Heart left ventricle (tissue), 16 donors: ENCODE measurements at regions of chr3 and their contacts with region 1.

Region 1: DNA sequence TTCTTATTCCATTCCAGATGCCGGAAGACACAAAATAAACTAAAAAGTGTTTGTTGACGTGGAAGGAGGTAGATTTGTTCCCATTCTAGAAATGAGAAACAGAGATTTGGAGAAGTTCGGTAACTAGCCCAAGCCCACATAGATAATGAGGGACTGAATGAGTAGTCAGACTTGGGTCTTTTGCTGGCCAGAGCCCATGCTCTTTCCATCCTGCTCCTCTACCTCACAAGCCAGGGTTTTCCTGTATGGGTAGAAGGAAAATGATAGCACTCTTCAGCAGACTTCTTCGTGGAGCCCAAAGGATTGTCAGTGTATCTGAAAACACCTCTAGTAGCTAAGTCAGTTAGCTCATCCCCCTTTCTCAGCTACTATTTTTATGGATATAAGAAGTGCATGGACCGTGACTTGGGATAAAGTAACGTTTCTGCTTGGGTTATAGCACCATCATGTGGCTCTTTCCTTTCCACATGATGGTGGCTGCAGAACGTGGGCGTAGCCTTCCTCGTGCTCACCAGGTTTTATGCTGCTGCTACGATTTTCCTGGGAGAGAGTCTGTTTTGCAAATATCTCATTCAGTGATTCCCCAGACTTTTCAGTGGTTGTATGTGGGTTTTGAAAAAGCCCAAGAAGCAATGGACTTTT is 84.6 kb downstream of the DGKG start:
- DNase-seq: peak in 1 of 5 donors; percentile 18
- ATAC-seq: peak in 3 of 4 donors; percentile 40 to 69 (median 54)
- H3K4me3 ChIP-seq: no peak overlapping the region
- H3K27ac ChIP-seq: no peak overlapping the region
- H3K4me1 ChIP-seq: peaks cover 0 to 20% (median 8%) of the 10 kb centered on the region in 12 donors
- H3K27me3 ChIP-seq: no peaks in the 10 kb centered on the region
- CTCF ChIP-seq: peak in 10 of 12 donors; percentile 35 to 69 (median 51)
- POLR2A ChIP-seq: no peak

Region 2: GRCh38 chr3:185976977-185977678 is 300.3 kb before region 1 on chr3:
- intact Hi-C with region 1: loop called in 7 of 10 experiments (anchors 2 to 10 kb)
- DNase-seq: peak; percentile 68 to 87 (median 69)
- ATAC-seq: peak in 3 of 4 donors; percentile 75 to 87 (median 79)
- H3K4me3 ChIP-seq: no peak overlapping the region
- H3K27ac ChIP-seq: no peak overlapping the region
- H3K4me1 ChIP-seq: peaks cover 0 to 6% (median 0%) of the 10 kb centered on the region in 12 donors
- H3K27me3 ChIP-seq: no peaks in the 10 kb centered on the region
- CTCF ChIP-seq: peak; percentile 77 to 93 (median 87)
- POLR2A ChIP-seq: no peak

Region 3: DNA sequence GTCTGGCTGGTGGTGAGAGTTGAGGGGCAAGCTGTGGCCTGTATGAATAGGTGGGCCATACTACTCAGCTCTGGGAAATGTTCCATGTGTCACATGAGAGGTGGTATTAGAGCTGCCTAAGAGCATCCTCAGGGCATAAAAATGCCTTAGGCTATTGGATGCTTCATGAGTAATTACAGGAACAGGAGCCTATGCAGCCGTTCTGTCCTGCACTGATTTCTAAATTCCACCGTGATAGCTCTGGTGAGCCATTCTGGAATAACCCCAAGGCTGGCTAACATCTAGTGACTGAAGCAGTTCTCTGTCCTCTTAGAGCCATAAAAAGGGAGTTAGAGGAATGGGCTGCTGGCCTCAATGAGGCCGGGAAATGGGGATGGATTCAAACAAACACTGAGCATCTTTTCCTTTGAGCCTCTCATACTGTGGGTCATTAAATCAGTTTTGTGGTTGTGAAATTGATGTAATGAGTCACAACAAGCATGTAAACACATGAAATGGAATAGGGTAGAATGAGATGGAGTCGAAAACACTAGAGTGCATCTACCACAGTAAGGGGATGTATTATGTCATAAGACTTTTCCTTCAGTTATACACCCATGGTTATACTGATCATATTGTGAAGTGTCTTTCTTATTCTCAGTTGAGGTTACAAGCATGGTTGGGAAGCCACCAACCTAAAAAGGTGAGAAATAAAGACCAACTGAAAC is 43.6 kb after region 1 on chr3:
- intact Hi-C with region 1: loop called in 1 of 10 experiments (anchors 2 kb)
- DNase-seq: no peak
- ATAC-seq: peak in 2 of 4 donors; percentile 25 to 39
- H3K4me3 ChIP-seq: no peak overlapping the region
- H3K27ac ChIP-seq: no peak overlapping the region
- H3K4me1 ChIP-seq: peaks cover 0 to 23% (median 0%) of the 10 kb centered on the region in 12 donors
- H3K27me3 ChIP-seq: no peaks in the 10 kb centered on the region
- CTCF ChIP-seq: no peak
- POLR2A ChIP-seq: no peak

Region 4: DNA sequence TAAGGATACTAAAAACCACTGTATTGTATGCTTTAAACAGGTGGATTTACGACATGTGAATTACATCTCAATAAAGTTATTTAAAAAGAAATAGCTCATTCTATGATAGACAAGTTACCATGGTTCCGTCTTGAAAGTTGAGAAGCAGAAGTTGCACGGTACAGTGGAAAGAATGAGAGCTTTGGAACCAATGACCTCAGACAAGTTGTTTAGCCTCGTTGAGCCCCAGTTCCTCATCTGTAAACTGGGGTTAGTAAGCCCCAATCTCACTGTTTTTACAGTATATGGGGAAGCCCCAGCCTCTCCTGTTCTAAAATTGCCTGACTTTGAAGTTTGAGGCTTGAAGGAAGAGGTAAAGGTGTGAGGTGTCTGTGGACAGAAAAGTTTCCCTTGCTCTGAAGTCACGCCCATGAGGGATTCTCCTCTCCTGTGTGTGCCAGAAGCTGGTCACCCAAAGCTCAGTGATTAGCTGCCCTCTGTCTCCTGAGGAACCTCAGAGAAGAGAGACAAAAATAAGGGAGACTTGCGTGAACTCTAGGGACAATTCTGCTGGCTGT is 256.8 kb after region 1 on chr3:
- intact Hi-C with region 1: loop called in 1 of 10 experiments (anchors 10 kb)
- DNase-seq: no peak
- ATAC-seq: peak in 2 of 4 donors; percentile 16 to 60
- H3K4me3 ChIP-seq: no peak overlapping the region
- H3K27ac ChIP-seq: no peak overlapping the region
- H3K4me1 ChIP-seq: peaks cover 0 to 30% (median 7%) of the 10 kb centered on the region in 12 donors
- H3K27me3 ChIP-seq: no peaks in the 10 kb centered on the region
- CTCF ChIP-seq: no peak
- POLR2A ChIP-seq: no peak